ENCODE measurements at regions of chr10 and their contacts with region 1.

Region 1: DNA sequence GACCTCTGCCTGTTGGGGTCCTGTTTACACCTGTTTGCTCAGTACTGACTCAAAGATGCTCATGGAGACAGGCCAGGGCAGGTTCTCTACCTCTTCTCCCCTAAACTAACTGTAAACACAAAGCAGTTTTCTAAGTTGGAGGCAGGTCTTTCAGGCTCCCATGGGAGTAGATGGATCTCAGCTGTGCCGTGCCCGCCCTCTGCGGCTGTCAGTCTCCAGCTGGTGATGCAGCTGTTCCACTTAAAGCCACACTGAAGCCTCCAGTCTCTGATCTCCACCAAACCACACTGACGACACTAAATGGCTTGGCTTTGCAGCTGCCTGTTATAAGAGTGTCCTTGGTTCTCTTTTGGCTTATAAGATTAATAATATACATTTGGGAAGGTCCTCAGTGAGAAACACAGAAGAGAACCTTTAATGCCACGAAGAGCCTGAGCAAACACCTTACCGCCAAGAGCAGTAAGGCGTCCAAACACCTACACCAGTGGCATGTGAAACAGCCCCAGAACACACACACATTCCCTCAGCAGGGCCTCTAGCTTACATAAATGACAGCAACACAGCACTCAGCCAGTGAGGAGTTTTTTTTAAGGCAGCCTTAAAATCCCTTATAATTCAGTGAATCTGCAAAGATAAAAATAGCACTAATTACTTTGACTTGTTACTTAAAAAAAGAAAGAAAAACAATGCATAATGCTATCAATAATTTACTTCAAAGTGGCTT is 60.4 kb upstream of the KCNIP2 start:
- DNase-seq: peak; percentile 88
- ATAC-seq: peak; percentile 77
- H3K4me3 ChIP-seq: peak overlapping the region; percentile 4; the same call in 1 of the 2 replicates
- H3K27ac ChIP-seq: peak overlapping the region; percentile 91
- H3K4me1 ChIP-seq: peaks cover 45% of the 10 kb centered on the region
- H3K27me3 ChIP-seq: no peaks in the 10 kb centered on the region
- CTCF ChIP-seq: 0 out of 6 replicates have a peak, but pooled peaks of 1 of the 3 experiments have one; percentile 0
- EP300 ChIP-seq: peak; percentile 71 to 92; a peak in 3 of 4 replicates
- POLR2A ChIP-seq: peak; percentile 44; the same call in 1 of the 2 replicates
- RAD21 ChIP-seq: no peak

Region 2: DNA sequence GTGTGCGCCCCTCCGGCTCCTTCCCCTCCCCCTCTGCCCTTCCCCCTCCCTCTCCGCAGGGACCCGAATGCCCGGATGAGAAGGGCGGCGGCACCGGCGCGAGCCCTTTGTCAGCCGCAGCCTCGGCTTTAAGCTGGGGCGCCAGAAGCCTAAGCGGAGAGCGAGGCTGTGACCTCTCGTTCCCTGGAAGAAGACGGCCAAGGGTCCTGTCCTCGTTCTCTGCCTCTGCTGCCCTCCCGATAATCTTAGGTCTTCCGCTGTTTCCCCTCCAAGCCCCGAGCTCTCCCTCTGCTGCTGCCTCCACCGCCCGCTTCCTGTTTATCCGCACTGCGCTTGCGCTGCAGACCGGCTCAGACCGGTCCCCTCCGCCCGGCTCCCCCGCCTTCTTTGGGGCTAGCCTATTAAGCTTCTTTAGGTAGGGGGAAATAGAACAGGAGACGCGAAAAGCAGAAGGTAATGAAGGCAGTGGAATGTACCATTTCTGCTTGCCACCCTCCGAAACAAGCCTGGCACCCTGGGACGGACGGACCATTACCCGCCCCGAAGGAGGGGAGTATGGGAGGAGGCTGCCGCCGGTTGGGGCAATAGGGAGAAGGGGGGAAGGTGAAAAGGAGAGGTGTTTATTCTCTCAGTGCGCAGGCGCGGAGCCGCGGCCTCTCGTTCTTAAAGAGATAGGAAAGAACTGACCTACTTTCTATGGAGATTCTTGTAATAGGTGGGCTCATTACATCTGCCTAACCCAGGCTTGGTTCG is 85.7 kb before region 1 on chr10 and contains the start of gene OGA:
- CTCF ChIA-PET with region 1: no interaction called
- POLR2A ChIA-PET with region 1: interaction called, 10 read pairs
- RAD21 ChIA-PET with region 1: interaction called, 6 read pairs
- SMC1A ChIA-PET with region 1: interaction called, 4 read pairs
- in situ Hi-C with region 1: no loop called
- intact Hi-C with region 1: no loop called
- DNase-seq: peak; percentile 100
- ATAC-seq: peak; percentile 91
- H3K4me3 ChIP-seq: peak within 1 kb of the TSS; percentile 81
- H3K27ac ChIP-seq: peak within 1 kb of the TSS; percentile 95
- H3K4me1 ChIP-seq: peaks cover 11% of the 10 kb centered on the region; the same call in 1 of the 2 replicates
- H3K27me3 ChIP-seq: no peaks in the 10 kb centered on the region
- CTCF ChIP-seq: no peak
- EP300 ChIP-seq: peak; percentile 58 to 73; a peak in 2 of 4 replicates
- POLR2A ChIP-seq: peak; percentile 92
- RAD21 ChIP-seq: no peak
- polyA plus RNA-seq, gene OGA: 23.0 to 28.3 TPM

Region 3: DNA sequence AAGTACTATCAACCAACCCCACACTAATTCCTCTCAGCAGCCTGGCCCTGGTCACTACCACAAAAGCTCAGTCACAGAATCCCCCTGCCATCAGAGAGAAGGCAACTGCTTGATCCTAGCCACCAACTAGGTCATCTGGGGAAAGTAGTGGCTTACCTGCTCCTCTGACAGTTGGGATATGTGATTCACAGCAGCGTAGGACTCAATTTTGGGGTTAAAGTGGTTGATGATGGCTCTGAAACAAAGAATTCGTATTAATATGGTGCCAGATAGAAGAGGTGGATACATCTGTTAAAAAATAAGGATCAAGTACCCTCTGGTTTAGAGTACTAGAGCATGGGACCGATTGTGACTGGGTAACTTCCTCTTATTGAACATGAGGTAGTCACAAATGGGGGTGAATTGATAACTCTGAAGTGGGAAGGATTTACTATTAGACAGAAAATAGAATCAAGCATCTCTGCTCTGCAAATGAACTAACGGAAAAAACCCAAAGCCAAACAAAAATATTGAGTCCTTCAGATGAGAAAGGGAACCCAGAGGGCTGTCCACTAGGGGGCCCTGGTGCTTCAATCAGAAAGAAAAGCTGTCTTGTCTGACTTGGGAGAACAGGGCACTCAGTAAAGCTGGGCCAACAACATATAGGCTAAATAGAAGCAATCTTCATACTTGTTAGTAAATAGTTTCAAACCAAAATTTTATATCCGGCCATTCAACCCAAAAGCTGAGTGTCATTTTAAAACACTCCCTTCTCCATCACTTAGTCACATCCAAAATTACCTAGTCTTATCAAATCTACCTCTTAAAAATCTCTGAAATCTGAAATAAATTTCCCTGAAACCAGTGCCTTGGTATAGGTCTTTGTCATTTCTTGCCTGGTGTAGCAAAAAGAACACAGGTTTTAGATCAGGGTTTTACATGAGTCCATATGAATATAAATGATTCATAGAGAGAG is 14.5 kb before region 1 on chr10:
- CTCF ChIA-PET with region 1: interaction called, 127 read pairs
- POLR2A ChIA-PET with region 1: interaction called, 27 read pairs
- RAD21 ChIA-PET with region 1: interaction called, 124 read pairs
- SMC1A ChIA-PET with region 1: interaction called, 89 read pairs
- in situ Hi-C with region 1: no loop called
- intact Hi-C with region 1: no loop called
- DNase-seq: peak; percentile 66
- ATAC-seq: peak; percentile 93
- H3K4me3 ChIP-seq: 0 out of 2 replicates have a peak overlapping the region, but pooled peaks have one; percentile 29
- H3K27ac ChIP-seq: peak overlapping the region; percentile 67
- H3K4me1 ChIP-seq: peaks cover 22% of the 10 kb centered on the region
- H3K27me3 ChIP-seq: no peaks in the 10 kb centered on the region
- CTCF ChIP-seq: peak; percentile 86 to 93 (median 91)
- EP300 ChIP-seq: no peak
- POLR2A ChIP-seq: no peak
- RAD21 ChIP-seq: peak; percentile 98

Region 4: DNA sequence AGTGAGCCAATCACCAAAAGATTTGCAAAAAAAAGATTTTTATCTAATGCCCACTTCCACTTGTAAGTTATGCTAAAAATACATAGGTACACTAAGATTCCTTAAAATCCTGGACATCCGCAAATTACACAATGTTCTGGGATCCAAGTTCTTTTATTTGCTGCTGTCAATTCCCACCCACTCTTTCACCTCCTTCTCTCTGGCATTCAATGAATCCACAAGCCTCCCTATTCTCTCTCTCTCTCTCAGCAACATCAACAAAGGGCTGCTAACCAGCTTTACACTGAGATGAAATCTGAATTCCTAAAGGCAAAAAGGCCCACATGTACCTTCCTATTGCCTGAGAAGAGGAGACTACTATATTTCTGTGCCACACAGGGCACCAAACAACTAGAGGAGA is 52.1 kb after region 1 on chr10:
- CTCF ChIA-PET with region 1: interaction called, 6 read pairs
- POLR2A ChIA-PET with region 1: interaction called, 4 read pairs
- RAD21 ChIA-PET with region 1: no interaction called
- SMC1A ChIA-PET with region 1: interaction called, 13 read pairs
- in situ Hi-C with region 1: no loop called
- intact Hi-C with region 1: no loop called
- DNase-seq: no peak
- ATAC-seq: no peak
- H3K4me3 ChIP-seq: no peak overlapping the region
- H3K27ac ChIP-seq: no peak overlapping the region
- H3K4me1 ChIP-seq: no peaks in the 10 kb centered on the region
- H3K27me3 ChIP-seq: no peaks in the 10 kb centered on the region
- CTCF ChIP-seq: no peak
- EP300 ChIP-seq: no peak
- POLR2A ChIP-seq: no peak
- RAD21 ChIP-seq: no peak

Region 5: GRCh38 chr10:101968940-101969321 is 64.9 kb after region 1 on chr10:
- CTCF ChIA-PET with region 1: interaction called, 25 read pairs
- POLR2A ChIA-PET with region 1: interaction called, 35 read pairs
- RAD21 ChIA-PET with region 1: interaction called, 68 read pairs
- SMC1A ChIA-PET with region 1: interaction called, 100 read pairs
- in situ Hi-C with region 1: no loop called
- intact Hi-C with region 1: loop called (anchors 2 kb)
- DNase-seq: peak; percentile 76
- ATAC-seq: peak; percentile 72
- H3K4me3 ChIP-seq: no peak overlapping the region
- H3K27ac ChIP-seq: peak overlapping the region; percentile 99
- H3K4me1 ChIP-seq: peaks cover 80% of the 10 kb centered on the region
- H3K27me3 ChIP-seq: no peaks in the 10 kb centered on the region
- CTCF ChIP-seq: no peak
- EP300 ChIP-seq: peak in 1 of 2 experiments; percentile 74
- POLR2A ChIP-seq: no peak
- RAD21 ChIP-seq: no peak

Region 6: DNA sequence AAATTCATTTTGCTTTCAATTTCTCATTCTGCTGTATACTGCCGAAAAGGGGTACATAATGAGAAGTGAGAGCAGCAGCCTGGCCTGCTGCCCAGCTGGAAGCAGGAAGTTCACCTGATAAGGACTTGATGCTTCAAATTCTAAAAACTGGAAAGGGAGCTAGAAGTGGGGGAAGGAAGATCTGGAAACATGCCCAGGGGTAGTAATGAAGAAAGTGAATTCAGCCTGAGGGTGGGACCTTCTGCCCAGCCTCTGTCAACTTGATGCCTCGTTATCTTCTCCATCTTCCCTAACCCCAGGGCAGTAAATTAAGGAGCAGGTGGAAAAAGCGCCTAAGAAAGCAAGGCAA is 82.6 kb after region 1 on chr10:
- CTCF ChIA-PET with region 1: interaction called, 4 read pairs
- POLR2A ChIA-PET with region 1: interaction called, 3 read pairs
- RAD21 ChIA-PET with region 1: interaction called, 15 read pairs
- SMC1A ChIA-PET with region 1: interaction called, 3 read pairs
- in situ Hi-C with region 1: no loop called
- intact Hi-C with region 1: no loop called
- DNase-seq: no peak
- ATAC-seq: peak; percentile 94
- H3K4me3 ChIP-seq: peak overlapping the region; percentile 25; the same call in 1 of the 2 replicates
- H3K27ac ChIP-seq: peak overlapping the region; percentile 88
- H3K4me1 ChIP-seq: peaks cover 16% of the 10 kb centered on the region
- H3K27me3 ChIP-seq: no peaks in the 10 kb centered on the region
- CTCF ChIP-seq: no peak
- EP300 ChIP-seq: no peak
- POLR2A ChIP-seq: no peak
- RAD21 ChIP-seq: no peak

Measured in GM12878 (cell line).